ENCODE measurements at regions of chr1 and their contacts with region 1.

Region 1: GRCh38 chr1:207025144-207025880 is 7.2 kb downstream of the C1orf116 start:
- DNase-seq: peak; percentile 80 to 90
- H3K4me3 ChIP-seq: no peak overlapping the region
- H3K27ac ChIP-seq: peak overlapping the region; percentile 97
- H3K4me1 ChIP-seq: peaks cover 90% of the 10 kb centered on the region
- H3K27me3 ChIP-seq: no peaks in the 10 kb centered on the region
- CTCF ChIP-seq: no peak

Region 2: DNA sequence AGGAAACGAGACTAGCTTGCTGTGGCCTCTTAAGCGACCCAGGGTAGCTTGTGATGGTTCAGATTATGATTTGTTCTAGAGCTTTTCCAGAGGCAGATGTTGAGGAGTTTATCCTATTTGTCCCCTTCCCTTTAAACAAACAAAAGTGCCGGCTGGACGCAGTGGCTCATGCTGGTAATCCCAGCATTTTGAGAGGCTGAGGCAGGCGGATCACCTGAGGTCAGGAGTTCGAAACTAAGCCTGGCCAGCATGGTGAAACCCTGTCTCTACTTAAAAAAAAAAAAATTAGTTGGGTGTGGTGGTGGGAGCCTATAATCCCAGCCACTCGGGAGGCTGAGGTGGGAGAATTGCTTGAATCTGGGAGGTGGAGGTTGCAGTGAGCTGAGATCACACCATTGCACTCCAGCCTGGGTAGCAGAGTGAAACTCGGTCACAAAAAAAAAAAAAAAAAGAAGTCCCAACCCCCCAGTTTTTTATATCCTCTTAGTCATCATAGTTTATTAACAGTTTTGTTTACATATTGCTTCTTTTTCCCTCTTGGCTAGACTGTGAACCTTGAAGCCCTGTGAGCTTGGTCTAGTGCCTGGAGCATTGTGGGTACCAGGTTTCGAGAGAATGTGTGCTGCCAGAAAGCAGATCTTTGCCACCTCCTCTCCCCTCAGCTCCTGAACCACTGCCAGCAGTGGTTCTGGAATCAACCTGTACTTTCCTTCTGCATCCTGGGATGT is 310.8 kb before region 1 on chr1:
- CTCF ChIA-PET with region 1: no interaction called
- POLR2A ChIA-PET with region 1: interaction called, 15 read pairs
- intact Hi-C with region 1: no loop called
- DNase-seq: peak; percentile 24 to 92
- H3K4me3 ChIP-seq: no peak overlapping the region
- H3K27ac ChIP-seq: peak overlapping the region; percentile 72
- H3K4me1 ChIP-seq: peaks cover 74% of the 10 kb centered on the region
- H3K27me3 ChIP-seq: no peaks in the 10 kb centered on the region
- CTCF ChIP-seq: no peak

Region 3: GRCh38 chr1:206878456-206878855 is 146.9 kb before region 1 on chr1:
- CTCF ChIA-PET with region 1: no interaction called
- POLR2A ChIA-PET with region 1: no interaction called
- intact Hi-C with region 1: no loop called
- DNase-seq: no peak
- H3K4me3 ChIP-seq: no peak overlapping the region
- H3K27ac ChIP-seq: no peak overlapping the region
- H3K4me1 ChIP-seq: no peaks in the 10 kb centered on the region
- H3K27me3 ChIP-seq: no peaks in the 10 kb centered on the region
- CTCF ChIP-seq: no peak

Region 4: GRCh38 chr1:207910591-207911354 is 885.5 kb after region 1 on chr1 and contains the start of gene CD34:
- CTCF ChIA-PET with region 1: no interaction called
- POLR2A ChIA-PET with region 1: no interaction called
- intact Hi-C with region 1: no loop called
- DNase-seq: no peak
- H3K4me3 ChIP-seq: no peak within 1 kb of the TSS
- H3K27ac ChIP-seq: no peak within 1 kb of the TSS
- H3K4me1 ChIP-seq: no peaks in the 10 kb centered on the region
- H3K27me3 ChIP-seq: peaks cover 5% of the 10 kb centered on the region
- CTCF ChIP-seq: no peak
- total RNA-seq, gene CD34: not detected in 2 replicates

Measured in PC-9 (cell line).